ENCODE measurements at regions of chr15 and their contacts with region 1.

Region 1: GRCh38 chr15:83248151-83249029 is 36.1 kb downstream of the BNC1 start:
- DNase-seq: peak; percentile 26
- H3K4me3 ChIP-seq: no peak overlapping the region
- H3K27ac ChIP-seq: no peak overlapping the region
- H3K27me3 ChIP-seq: peaks cover 8% of the 10 kb centered on the region
- CTCF ChIP-seq: peak; percentile 84

Region 2: DNA sequence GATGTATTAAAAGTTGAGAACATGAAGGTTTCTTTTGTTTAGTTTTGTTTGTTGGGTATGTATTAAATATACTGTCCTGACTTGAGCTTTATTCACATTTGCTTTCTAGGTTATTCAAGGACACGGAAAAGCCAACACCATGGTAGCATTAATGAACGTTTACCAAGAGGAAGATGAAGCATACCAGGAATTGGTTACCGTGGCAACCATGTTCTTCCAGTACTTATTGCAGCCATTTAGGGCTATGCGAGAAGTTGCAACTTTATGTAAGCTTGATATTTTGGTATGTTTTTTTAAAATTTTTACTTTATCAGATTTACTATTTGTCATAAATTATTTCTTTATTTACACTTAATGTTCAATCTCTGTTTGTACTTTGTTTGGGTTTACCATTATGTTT is 435.4 kb before region 1 on chr15:
- CTCF ChIA-PET with region 1: no interaction called
- POLR2A ChIA-PET with region 1: no interaction called
- DNase-seq: no peak
- H3K4me3 ChIP-seq: no peak overlapping the region
- H3K27ac ChIP-seq: no peak overlapping the region
- H3K27me3 ChIP-seq: no peaks in the 10 kb centered on the region
- CTCF ChIP-seq: no peak

Region 3: GRCh38 chr15:82979726-82980125 is 268.7 kb before region 1 on chr15:
- CTCF ChIA-PET with region 1: no interaction called
- POLR2A ChIA-PET with region 1: no interaction called
- DNase-seq: no peak
- H3K4me3 ChIP-seq: no peak overlapping the region
- H3K27ac ChIP-seq: no peak overlapping the region
- H3K27me3 ChIP-seq: no peaks in the 10 kb centered on the region
- CTCF ChIP-seq: no peak

Region 4: GRCh38 chr15:83108266-83109226 is 139.8 kb before region 1 on chr15:
- CTCF ChIA-PET with region 1: no interaction called
- POLR2A ChIA-PET with region 1: no interaction called
- DNase-seq: peak; percentile 29
- H3K4me3 ChIP-seq: peak overlapping the region; percentile 64
- H3K27ac ChIP-seq: peak overlapping the region; percentile 47
- H3K27me3 ChIP-seq: no peaks in the 10 kb centered on the region
- CTCF ChIP-seq: no peak

Region 5: GRCh38 chr15:83230258-83230657 is 18.1 kb before region 1 on chr15:
- CTCF ChIA-PET with region 1: interaction called, 10 read pairs
- POLR2A ChIA-PET with region 1: no interaction called
- DNase-seq: no peak
- H3K4me3 ChIP-seq: no peak overlapping the region
- H3K27ac ChIP-seq: no peak overlapping the region
- H3K27me3 ChIP-seq: no peaks in the 10 kb centered on the region
- CTCF ChIP-seq: no peak

Region 6: DNA sequence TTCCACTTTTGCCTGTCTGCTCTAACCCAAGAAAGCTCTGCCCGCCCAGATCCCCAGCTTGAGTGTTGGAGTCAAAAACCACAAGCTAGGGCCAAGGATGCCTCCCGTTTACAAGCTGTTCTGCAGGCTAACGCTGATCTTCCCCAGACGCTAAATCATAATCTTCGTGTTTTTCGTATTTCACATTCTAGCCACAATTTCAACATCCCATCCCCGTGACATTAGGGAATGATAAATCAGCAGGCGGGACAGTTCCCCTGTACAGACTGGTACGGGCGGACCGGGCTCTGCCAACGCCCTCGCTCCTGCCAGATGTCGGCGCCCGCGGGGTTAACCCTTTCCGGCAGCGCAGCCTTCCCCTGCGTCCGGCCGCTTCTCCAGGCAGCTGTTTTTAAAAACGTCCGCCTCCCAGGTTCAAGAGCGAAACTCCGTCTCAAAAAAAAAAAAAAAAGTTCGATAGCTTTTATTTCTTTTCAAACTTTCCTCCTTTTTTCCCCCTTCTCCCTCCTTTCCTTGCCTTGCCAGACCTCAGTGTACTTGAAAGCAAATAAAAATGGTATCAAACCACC is 117.1 kb after region 1 on chr15:
- CTCF ChIA-PET with region 1: interaction called, 13 read pairs
- POLR2A ChIA-PET with region 1: no interaction called
- DNase-seq: no peak
- H3K4me3 ChIP-seq: peak overlapping the region; percentile 46
- H3K27ac ChIP-seq: no peak overlapping the region
- H3K27me3 ChIP-seq: peaks cover 34% of the 10 kb centered on the region
- CTCF ChIP-seq: no peak

Region 7: GRCh38 chr15:83436458-83437158 is 188.2 kb after region 1 on chr15:
- CTCF ChIA-PET with region 1: interaction called, 208 read pairs
- POLR2A ChIA-PET with region 1: no interaction called
- DNase-seq: no peak
- H3K4me3 ChIP-seq: no peak overlapping the region
- H3K27ac ChIP-seq: no peak overlapping the region
- H3K27me3 ChIP-seq: no peaks in the 10 kb centered on the region
- CTCF ChIP-seq: peak; percentile 67

Region 8: GRCh38 chr15:83526319-83526718 is 277.9 kb after region 1 on chr15:
- CTCF ChIA-PET with region 1: no interaction called
- POLR2A ChIA-PET with region 1: no interaction called
- DNase-seq: no peak
- H3K4me3 ChIP-seq: no peak overlapping the region
- H3K27ac ChIP-seq: no peak overlapping the region
- H3K27me3 ChIP-seq: no peaks in the 10 kb centered on the region
- CTCF ChIP-seq: no peak

Region 9: DNA sequence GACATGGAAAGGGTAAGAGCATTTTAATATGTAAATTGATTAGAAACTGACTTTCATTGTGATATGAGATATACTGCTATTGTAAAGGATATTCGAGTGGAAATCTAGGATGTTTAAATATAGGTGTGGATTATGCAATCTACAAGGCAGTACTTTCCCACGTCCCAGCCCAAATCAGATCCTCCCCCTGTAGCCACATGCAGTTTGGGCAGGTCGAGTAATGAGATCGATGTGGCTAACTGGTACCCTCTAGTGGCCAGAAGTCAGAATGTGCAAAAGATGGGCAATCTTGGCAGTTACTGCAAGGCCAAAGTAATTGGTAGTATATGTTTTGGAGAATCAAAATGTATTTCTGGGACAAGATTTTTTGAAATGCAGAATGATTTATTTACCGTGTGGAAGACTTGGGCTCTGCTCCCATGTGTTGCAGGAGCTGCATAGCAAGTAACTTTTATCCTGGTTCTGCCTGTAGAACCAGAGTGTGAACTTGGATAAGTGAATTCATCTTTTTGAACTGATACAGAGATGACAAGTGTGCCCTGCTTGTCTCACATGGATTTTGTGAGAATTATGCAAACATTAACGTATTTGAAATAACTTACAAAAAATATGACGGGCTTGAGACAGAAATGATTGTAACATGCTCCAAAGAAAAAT is 311.0 kb after region 1 on chr15:
- CTCF ChIA-PET with region 1: interaction called, 176 read pairs
- POLR2A ChIA-PET with region 1: no interaction called
- DNase-seq: peak; percentile 30
- H3K4me3 ChIP-seq: no peak overlapping the region
- H3K27ac ChIP-seq: no peak overlapping the region
- H3K27me3 ChIP-seq: no peaks in the 10 kb centered on the region
- CTCF ChIP-seq: peak; percentile 91

Measured in AG04450 (cell line).